Activated CD8-positive, alpha-beta T cell treated with anti-CD3 and anti-CD28 coated beads, Interleukin-2, amount 10 ng/mL, durations not matched to agents 7 days and 5 days (primary cell): ENCODE measurements at regions of chr5 and their contacts with region 1.

Region 1: GRCh38 chr5:36079200-36079761 is 12.6 kb upstream of the UGT3A2 start:
- DNase-seq: peak; percentile 52
- ATAC-seq: peak; percentile 90
- H3K4me3 Mint-ChIP-seq: no peak overlapping the region
- H3K27ac Mint-ChIP-seq: no peak overlapping the region
- H3K4me1 Mint-ChIP-seq: no peaks in the 10 kb centered on the region
- H3K27me3 Mint-ChIP-seq: peaks cover 20% of the 10 kb centered on the region

Region 2: DNA sequence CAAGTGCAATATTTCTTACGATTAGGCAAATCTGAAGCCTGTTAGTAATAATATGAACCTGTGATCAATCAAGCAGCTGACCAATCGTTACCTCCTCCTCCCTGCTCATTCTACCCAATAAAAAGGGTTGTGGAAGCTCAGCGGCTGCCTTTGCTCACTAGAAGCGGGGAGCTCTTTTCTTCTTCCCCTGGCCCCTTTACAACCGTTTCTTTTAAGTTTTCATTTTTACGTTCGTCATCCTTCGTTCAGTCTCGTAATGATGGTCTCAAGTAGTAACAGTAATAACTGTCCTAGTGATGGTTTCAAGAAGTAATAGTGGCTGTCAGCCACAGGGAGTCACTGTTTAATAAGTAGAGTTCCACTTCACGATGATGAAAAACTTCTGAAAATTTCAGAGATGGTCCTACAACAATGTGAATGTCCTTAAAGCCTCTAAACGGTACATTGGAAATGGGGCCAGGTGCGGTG is 18.8 kb before region 1 on chr5:
- CTCF ChIA-PET with region 1: interaction called, 19 read pairs
- POLR2A ChIA-PET with region 1: interaction called, 3 read pairs
- DNase-seq: no peak
- ATAC-seq: no peak
- H3K4me3 Mint-ChIP-seq: no peak overlapping the region
- H3K27ac Mint-ChIP-seq: no peak overlapping the region
- H3K4me1 Mint-ChIP-seq: peaks cover 6% of the 10 kb centered on the region
- H3K27me3 Mint-ChIP-seq: peaks cover 23% of the 10 kb centered on the region

Region 3: GRCh38 chr5:36105819-36106218 is 26.5 kb after region 1 on chr5:
- CTCF ChIA-PET with region 1: interaction called, 11 read pairs
- POLR2A ChIA-PET with region 1: no interaction called
- DNase-seq: no peak
- ATAC-seq: no peak
- H3K4me3 Mint-ChIP-seq: no peak overlapping the region
- H3K27ac Mint-ChIP-seq: no peak overlapping the region
- H3K4me1 Mint-ChIP-seq: no peaks in the 10 kb centered on the region
- H3K27me3 Mint-ChIP-seq: no peaks in the 10 kb centered on the region

Region 4: DNA sequence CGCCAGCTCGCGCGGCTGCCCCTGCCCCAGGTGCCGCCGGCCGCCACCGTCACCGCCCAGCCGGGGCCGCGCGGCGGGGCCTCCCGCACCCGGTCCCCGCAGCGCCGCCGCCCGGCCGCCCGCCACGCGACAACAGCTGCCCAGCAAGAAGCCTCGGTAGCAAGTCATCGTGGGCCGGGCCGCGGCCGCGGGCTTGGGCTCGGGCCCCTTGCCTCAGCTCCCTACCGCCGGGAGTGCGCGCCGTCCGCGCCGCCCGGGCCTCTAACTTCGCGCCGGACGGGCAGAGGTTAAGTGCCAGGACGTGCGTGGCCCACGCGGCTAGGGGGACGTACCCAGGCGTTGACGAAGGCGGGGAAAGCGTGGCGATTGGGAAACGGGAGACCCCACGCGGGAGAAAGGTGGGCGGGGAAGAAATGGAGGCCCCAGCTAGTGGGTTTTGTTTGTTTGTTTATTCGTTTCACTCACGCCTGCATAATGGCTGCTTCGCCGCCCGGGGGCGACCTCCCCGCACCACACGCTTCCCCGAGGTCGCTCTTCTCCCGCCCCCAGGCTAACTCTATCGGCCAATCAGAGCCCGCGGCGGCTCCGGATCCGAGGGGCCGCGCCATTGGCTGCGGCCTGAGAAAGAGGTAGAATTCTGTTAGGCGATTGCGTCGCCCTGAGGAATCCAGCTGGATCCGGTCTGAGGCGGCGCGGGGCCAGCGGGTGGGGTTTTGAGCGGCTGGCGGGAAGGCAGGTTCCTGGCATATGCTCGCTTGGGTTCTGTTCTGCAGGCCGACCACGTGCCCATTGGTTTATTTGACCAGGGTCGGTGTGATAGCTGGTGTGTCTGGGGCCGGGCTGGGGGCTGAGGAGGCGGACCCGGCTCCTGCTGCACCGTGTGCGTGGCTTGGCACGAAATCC is 162.6 kb after region 1 on chr5 and contains the start of gene NADK2:
- CTCF ChIA-PET with region 1: interaction called, 10 read pairs
- POLR2A ChIA-PET with region 1: no interaction called
- DNase-seq: peak; percentile 93
- ATAC-seq: peak; percentile 90
- H3K4me3 Mint-ChIP-seq: peak within 1 kb of the TSS; percentile 76
- H3K27ac Mint-ChIP-seq: peak within 1 kb of the TSS; percentile 84
- H3K4me1 Mint-ChIP-seq: peaks cover 29% of the 10 kb centered on the region
- H3K27me3 Mint-ChIP-seq: no peaks in the 10 kb centered on the region
- total RNA-seq, gene NADK2: 11.0 to 12.8 TPM

Region 5: GRCh38 chr5:36507332-36507952 is 428.2 kb after region 1 on chr5:
- CTCF ChIA-PET with region 1: interaction called, 18 read pairs
- POLR2A ChIA-PET with region 1: no interaction called
- DNase-seq: peak; percentile 77
- ATAC-seq: peak; percentile 68
- H3K4me3 Mint-ChIP-seq: no peak overlapping the region
- H3K27ac Mint-ChIP-seq: no peak overlapping the region
- H3K4me1 Mint-ChIP-seq: no peaks in the 10 kb centered on the region
- H3K27me3 Mint-ChIP-seq: peaks cover 7% of the 10 kb centered on the region

Region 6: DNA sequence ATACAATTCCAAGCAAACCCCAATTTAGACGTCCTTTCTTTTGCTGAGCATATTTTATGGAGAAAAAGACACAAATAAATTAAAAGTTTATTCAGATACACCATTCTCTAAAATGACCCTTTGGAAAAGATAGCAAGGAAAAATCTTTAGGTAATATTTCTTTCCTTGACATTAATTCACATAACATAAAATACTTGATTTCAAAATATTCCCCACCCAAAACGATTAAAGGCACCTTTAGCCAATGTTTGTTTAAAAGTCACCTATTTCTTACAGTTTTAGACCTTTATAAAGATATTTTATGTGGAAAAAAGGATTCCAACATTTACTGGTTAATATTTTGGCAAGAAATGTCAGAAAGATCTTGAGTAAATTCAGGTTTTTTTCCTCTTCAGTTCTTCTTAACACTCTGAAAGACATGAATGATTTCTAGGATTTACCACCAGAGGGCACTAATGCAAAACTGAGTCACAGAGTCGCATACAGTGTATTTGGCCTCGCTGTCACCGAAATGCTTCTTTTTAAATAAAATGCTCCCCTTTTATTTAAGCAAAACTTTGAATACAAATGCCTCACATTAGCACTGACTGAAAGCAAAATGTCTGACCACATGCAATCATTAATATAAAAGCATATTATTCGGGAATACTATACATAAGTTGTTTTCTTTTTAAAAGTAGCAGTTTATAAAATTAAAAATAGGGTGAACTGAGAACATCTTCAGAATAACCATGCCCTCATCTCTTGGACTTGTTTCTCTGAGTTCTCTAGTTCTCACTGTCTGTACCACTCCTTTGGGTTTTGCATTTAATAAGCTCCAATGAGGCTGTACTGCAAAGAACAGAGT is 649.6 kb after region 1 on chr5:
- CTCF ChIA-PET with region 1: no interaction called
- POLR2A ChIA-PET with region 1: no interaction called
- DNase-seq: peak; percentile 44
- ATAC-seq: no peak
- H3K4me3 Mint-ChIP-seq: no peak overlapping the region
- H3K27ac Mint-ChIP-seq: no peak overlapping the region
- H3K4me1 Mint-ChIP-seq: peaks cover 16% of the 10 kb centered on the region
- H3K27me3 Mint-ChIP-seq: peaks cover 2% of the 10 kb centered on the region